ENCODE measurements at regions of chr2 and their contacts with region 1.

Region 1: GRCh38 chr2:172465417-172466334 is 38.3 kb downstream of the ITGA6 start:
- DNase-seq: peak; percentile 76
- H3K4me3 ChIP-seq: no peak overlapping the region
- H3K27ac ChIP-seq: peak overlapping the region; percentile 85
- H3K4me1 ChIP-seq: peaks cover 54% of the 10 kb centered on the region
- H3K27me3 ChIP-seq: no peaks in the 10 kb centered on the region
- CTCF ChIP-seq: peak; percentile 84 to 95

Region 2: GRCh38 chr2:171703574-171704347 is 761.9 kb before region 1 on chr2:
- CTCF ChIA-PET with region 1: no interaction called
- dilution Hi-C with region 1: no loop called
- in situ Hi-C with region 1: loop called in 1 of 2 experiments (anchors 25 kb)
- intact Hi-C with region 1: no loop called
- DNase-seq: peak; percentile 23
- H3K4me3 ChIP-seq: no peak overlapping the region
- H3K27ac ChIP-seq: no peak overlapping the region
- H3K4me1 ChIP-seq: peaks cover 9% of the 10 kb centered on the region
- H3K27me3 ChIP-seq: no peaks in the 10 kb centered on the region
- CTCF ChIP-seq: peak; percentile 41 to 54

Region 3: DNA sequence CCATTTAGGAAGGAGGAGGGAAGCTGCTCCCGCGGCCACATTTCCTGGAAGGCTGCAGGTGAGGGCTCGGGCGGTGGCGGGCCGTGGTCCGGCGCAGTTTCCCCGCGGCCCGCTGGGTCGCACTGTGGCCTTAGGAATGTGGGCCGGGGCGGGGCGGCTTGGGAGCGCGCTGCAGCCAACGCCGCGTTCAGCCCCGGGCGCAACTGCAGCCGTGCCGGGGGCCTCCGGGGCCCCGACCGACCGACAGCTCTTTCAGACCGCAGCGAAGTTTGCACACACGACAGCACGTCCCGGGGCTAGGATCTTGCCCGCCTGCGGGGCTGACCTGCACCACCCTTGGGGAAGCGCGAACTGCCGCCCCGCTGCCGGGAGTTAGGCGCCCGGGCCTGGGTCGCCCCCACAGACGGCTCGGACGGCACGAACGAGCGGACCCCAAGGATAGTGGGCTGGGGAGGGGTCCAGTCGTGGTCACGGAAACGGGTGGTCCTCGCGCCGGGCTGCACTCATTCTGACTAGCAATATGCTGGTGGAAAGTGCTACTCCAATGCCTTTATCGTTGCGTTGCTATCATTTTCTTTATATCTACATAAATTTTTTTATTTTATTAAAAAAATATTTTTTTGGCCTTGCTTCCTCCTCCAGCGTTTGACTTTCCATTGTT is 293.0 kb before region 1 on chr2:
- CTCF ChIA-PET with region 1: interaction called, 4 read pairs
- dilution Hi-C with region 1: no loop called
- in situ Hi-C with region 1: loop called in 1 of 2 experiments (anchors 5 kb)
- intact Hi-C with region 1: loop called (anchors 1 kb)
- DNase-seq: peak; percentile 66
- H3K4me3 ChIP-seq: peak overlapping the region; percentile 56 to 74 (median 64)
- H3K27ac ChIP-seq: peak overlapping the region; percentile 53
- H3K4me1 ChIP-seq: peaks cover 17% of the 10 kb centered on the region
- H3K27me3 ChIP-seq: no peaks in the 10 kb centered on the region
- CTCF ChIP-seq: peak; percentile 70 to 87

Region 4: GRCh38 chr2:172226244-172227061 is 239.2 kb before region 1 on chr2:
- CTCF ChIA-PET with region 1: no interaction called
- dilution Hi-C with region 1: no loop called
- in situ Hi-C with region 1: no loop called
- intact Hi-C with region 1: loop called (anchors 1 kb)
- DNase-seq: peak; percentile 56
- H3K4me3 ChIP-seq: no peak overlapping the region
- H3K27ac ChIP-seq: peak overlapping the region; percentile 63
- H3K4me1 ChIP-seq: peaks cover 52% of the 10 kb centered on the region
- H3K27me3 ChIP-seq: no peaks in the 10 kb centered on the region
- CTCF ChIP-seq: peak; percentile 72 to 78

Region 5: GRCh38 chr2:172285010-172285621 is 180.6 kb before region 1 on chr2:
- CTCF ChIA-PET with region 1: interaction called, 5 read pairs
- dilution Hi-C with region 1: no loop called
- in situ Hi-C with region 1: loop called in 1 of 2 experiments (anchors 10 kb)
- intact Hi-C with region 1: loop called (anchors 1 kb)
- DNase-seq: peak; percentile 28
- H3K4me3 ChIP-seq: no peak overlapping the region
- H3K27ac ChIP-seq: peak overlapping the region; percentile 26
- H3K4me1 ChIP-seq: peaks cover 54% of the 10 kb centered on the region
- H3K27me3 ChIP-seq: no peaks in the 10 kb centered on the region
- CTCF ChIP-seq: no peak

Region 6: DNA sequence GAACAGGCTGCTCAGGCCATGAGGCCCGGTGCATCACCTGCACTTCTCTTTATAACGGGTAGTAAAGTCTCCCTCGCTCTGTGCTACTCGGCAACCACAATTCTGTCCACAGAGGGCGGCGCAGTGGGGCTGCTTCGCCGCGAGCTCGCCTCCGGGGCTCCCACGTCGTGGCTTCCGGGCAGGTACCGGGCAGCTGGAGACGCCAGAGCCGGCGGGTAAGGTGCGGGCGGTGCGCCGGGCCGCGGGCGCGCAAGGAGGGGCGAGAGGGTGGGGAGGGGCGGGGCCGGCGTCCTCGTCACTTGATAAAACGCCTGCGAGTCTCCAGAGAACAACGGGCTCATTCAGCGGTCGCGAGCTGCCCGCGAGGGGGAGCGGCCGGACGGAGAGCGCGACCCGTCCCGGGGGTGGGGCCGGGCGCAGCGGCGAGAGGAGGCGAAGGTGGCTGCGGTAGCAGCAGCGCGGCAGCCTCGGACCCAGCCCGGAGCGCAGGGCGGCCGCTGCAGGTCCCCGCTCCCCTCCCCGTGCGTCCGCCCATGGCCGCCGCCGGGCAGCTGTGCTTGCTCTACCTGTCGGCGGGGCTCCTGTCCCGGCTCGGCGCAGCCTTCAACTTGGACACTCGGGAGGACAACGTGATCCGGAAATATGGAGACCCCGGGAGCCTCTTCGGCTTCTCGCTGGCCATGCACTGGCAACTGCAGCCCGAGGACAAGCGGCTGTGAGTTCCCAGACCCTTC is 38.3 kb before region 1 on chr2 and contains the start of gene ITGA6:
- CTCF ChIA-PET with region 1: interaction called, 38 read pairs
- dilution Hi-C with region 1: no loop called
- in situ Hi-C with region 1: no loop called
- intact Hi-C with region 1: loop called (anchors 1 kb)
- DNase-seq: peak; percentile 91
- H3K4me3 ChIP-seq: peak within 1 kb of the TSS; percentile 86 to 95 (median 87)
- H3K27ac ChIP-seq: peak within 1 kb of the TSS; percentile 93
- H3K4me1 ChIP-seq: peaks cover 23% of the 10 kb centered on the region
- H3K27me3 ChIP-seq: no peaks in the 10 kb centered on the region
- CTCF ChIP-seq: peak in 1 of 2 donors; percentile 24
- total RNA-seq, gene ITGA6: 562 to 887 TPM

Region 7: GRCh38 chr2:172564376-172564775 is 98.7 kb after region 1 on chr2:
- CTCF ChIA-PET with region 1: no interaction called
- dilution Hi-C with region 1: no loop called
- in situ Hi-C with region 1: no loop called
- intact Hi-C with region 1: no loop called
- DNase-seq: peak; percentile 36
- H3K4me3 ChIP-seq: no peak overlapping the region
- H3K27ac ChIP-seq: no peak overlapping the region
- H3K4me1 ChIP-seq: no peaks in the 10 kb centered on the region
- H3K27me3 ChIP-seq: no peaks in the 10 kb centered on the region
- CTCF ChIP-seq: no peak